Activated naive CD4-positive, alpha-beta T cell treated with anti-CD3 and anti-CD28 coated beads for 36 hours (primary cell): ENCODE measurements at regions of chr2 and their contacts with region 1.

Region 1: GRCh38 chr2:241686649-241687425 is at the start of gene DTYMK:
- DNase-seq: peak; percentile 97
- H3K4me3 Mint-ChIP-seq: peak within 1 kb of the TSS; percentile 99
- H3K27ac Mint-ChIP-seq: peak within 1 kb of the TSS; percentile 94
- H3K4me1 Mint-ChIP-seq: peaks cover 39% of the 10 kb centered on the region
- H3K27me3 Mint-ChIP-seq: no peaks in the 10 kb centered on the region
- total RNA-seq, gene DTYMK: 88.0 to 93.8 TPM

Region 2: DNA sequence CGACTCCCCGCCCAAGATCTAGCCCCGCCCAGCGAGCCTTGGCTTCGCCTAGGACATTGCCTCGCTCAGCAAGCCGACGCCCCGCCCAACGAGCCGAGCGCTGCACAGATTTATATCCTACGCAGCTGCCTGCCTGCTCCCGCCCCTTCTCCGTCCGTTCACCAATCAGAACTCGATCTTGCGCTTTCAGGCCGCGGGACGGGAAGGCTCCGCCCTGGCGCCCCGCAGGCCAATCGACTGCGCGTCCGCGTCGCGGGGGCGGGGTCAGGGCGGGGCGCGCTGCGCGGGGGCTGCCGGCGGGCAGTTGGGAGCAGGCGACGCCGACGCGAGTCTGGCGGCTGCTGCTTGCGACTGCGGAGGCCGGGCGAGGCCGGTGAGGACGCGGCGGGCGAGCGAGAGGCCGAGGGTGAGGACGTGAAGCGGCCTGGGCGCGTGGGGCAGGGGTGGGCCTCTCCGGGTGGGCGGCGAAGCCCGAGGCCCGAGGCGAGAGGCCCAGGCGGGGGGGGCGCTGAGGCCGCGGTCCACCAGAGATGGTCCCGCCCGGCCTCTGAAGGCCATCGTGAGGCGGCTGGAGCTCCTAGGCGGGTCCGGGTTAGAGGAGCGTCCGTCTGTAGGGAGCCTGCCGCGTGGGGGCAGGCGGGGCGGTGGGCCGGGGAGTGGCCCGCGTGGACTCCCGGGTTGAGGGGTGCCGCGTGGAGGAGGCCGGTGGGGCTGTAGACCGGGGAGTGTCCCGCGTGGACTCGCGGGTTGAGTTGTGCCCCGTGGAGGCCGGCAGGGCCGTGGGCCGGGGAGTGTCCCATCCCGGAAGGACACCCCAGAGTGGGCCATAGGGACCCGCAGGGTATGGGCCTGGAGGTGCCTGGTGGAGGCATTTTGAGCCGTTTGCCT is 330.6 kb before region 1 on chr2 and contains the start of gene FARP2:
- CTCF ChIA-PET with region 1: no interaction called
- intact Hi-C with region 1: loop called (anchors 5 kb)
- DNase-seq: peak; percentile 99
- H3K4me3 Mint-ChIP-seq: peak within 1 kb of the TSS; percentile 78
- H3K27ac Mint-ChIP-seq: peak within 1 kb of the TSS; percentile 76
- H3K4me1 Mint-ChIP-seq: peaks cover 27% of the 10 kb centered on the region
- H3K27me3 Mint-ChIP-seq: no peaks in the 10 kb centered on the region
- total RNA-seq, gene FARP2: 19.5 to 19.6 TPM

Region 3: GRCh38 chr2:241724259-241724974 is 37.6 kb after region 1 on chr2:
- CTCF ChIA-PET with region 1: no interaction called
- intact Hi-C with region 1: no loop called
- DNase-seq: peak; percentile 47
- H3K4me3 Mint-ChIP-seq: no peak overlapping the region
- H3K27ac Mint-ChIP-seq: no peak overlapping the region
- H3K4me1 Mint-ChIP-seq: peaks cover 2% of the 10 kb centered on the region
- H3K27me3 Mint-ChIP-seq: no peaks in the 10 kb centered on the region

Region 4: GRCh38 chr2:241734467-241735208 is 47.8 kb after region 1 on chr2 and contains the start of gene D2HGDH:
- CTCF ChIA-PET with region 1: interaction called, 5 read pairs
- intact Hi-C with region 1: loop called (anchors 1 kb)
- DNase-seq: peak; percentile 95
- H3K4me3 Mint-ChIP-seq: peak within 1 kb of the TSS; percentile 78
- H3K27ac Mint-ChIP-seq: no peak within 1 kb of the TSS
- H3K4me1 Mint-ChIP-seq: peaks cover 52% of the 10 kb centered on the region
- H3K27me3 Mint-ChIP-seq: no peaks in the 10 kb centered on the region
- total RNA-seq, gene D2HGDH: 19.4 to 23.1 TPM